Activated B cell treated with CpG ODN at 0.5 μM for 24 hours (primary cell): ENCODE measurements at regions of chr15 and their contacts with region 1.

Region 1: DNA sequence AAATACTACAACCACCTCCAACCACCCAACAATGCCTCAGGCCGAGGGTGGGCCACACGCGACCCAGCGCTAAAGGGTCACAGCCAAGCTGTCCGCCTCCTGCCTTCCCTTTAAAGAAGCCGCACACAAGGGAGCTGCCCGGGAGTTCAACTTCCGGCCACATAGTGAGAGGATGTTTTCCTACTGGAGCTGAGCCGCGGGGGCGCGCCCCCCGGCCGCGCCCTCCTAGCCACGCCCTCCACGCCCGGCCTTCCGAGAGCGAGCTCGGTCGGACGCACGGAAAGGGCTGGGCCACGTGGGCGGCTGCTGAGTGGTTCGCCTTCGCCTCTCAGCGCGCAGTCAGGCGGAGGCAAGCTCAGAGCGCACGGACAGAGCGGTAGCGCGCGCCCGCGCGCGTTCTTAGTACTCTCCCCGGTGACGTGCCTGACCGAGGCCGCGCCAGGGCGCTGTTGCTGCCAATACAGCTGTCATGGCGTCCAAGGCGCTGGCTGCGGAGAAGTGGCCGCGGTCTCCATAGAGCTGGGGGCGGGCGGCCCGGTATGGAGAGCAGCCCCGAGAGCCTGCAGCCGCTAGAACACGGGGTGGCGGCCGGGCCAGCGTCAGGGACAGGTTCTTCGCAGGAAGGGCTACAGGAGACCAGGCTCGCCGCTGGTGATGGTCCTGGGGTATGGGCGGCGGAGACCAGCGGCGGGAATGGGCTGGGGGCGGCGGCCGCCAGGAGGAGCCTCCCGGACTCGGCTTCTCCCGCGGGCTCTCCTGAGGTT is at the start of gene MINDY2:
- DNase-seq: peak; percentile 89
- ATAC-seq: peak; percentile 94
- H3K4me3 Mint-ChIP-seq: peak within 1 kb of the TSS; percentile 93
- H3K27ac Mint-ChIP-seq: peak within 1 kb of the TSS; percentile 96
- H3K4me1 Mint-ChIP-seq: peaks cover 6% of the 10 kb centered on the region
- H3K27me3 Mint-ChIP-seq: no peaks in the 10 kb centered on the region
- CTCF ChIP-seq: no peak
- total RNA-seq, gene MINDY2: 5.8 and 6.2 TPM in 2 replicates

Region 2: GRCh38 chr15:58677426-58677825 is 93.6 kb before region 1 on chr15:
- CTCF ChIA-PET with region 1: interaction called, 3 read pairs
- POLR2A ChIA-PET with region 1: no interaction called
- intact Hi-C with region 1: loop called (anchors 1 kb)
- DNase-seq: no peak
- ATAC-seq: no peak
- H3K4me3 Mint-ChIP-seq: no peak overlapping the region
- H3K27ac Mint-ChIP-seq: no peak overlapping the region
- H3K4me1 Mint-ChIP-seq: no peaks in the 10 kb centered on the region
- H3K27me3 Mint-ChIP-seq: no peaks in the 10 kb centered on the region
- CTCF ChIP-seq: no peak

Region 3: DNA sequence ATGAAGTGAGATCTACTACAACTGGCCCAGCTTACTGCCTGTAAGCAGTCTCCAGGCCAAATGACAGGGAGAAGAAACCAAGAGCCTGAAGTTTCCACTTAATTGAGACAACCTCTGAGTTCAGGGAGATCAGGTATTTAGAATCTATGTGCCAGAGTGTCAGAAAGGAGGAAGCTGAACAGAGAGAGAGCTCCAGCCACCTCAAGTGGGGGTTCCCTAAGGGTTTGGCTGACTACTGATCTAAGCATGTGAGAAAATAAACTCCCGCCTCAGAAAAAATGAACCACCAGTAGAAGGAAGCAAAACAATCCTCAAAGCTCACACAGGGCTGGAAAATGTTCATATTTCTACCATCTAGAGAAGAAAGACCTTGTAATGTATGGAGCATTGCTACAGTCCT is 46.6 kb before region 1 on chr15:
- CTCF ChIA-PET with region 1: interaction called, 3 read pairs
- POLR2A ChIA-PET with region 1: interaction called, 19 read pairs
- intact Hi-C with region 1: loop called (anchors 2 kb)
- DNase-seq: no peak
- ATAC-seq: peak; percentile 92
- H3K4me3 Mint-ChIP-seq: peak overlapping the region; percentile 19
- H3K27ac Mint-ChIP-seq: peak overlapping the region; percentile 74
- H3K4me1 Mint-ChIP-seq: peaks cover 64% of the 10 kb centered on the region
- H3K27me3 Mint-ChIP-seq: no peaks in the 10 kb centered on the region
- CTCF ChIP-seq: no peak

Region 4: GRCh38 chr15:58758138-58758537 is 12.9 kb before region 1 on chr15:
- CTCF ChIA-PET with region 1: interaction called, 11 read pairs
- POLR2A ChIA-PET with region 1: interaction called, 4 read pairs
- intact Hi-C with region 1: no loop called
- DNase-seq: no peak
- ATAC-seq: no peak
- H3K4me3 Mint-ChIP-seq: no peak overlapping the region
- H3K27ac Mint-ChIP-seq: no peak overlapping the region
- H3K4me1 Mint-ChIP-seq: no peaks in the 10 kb centered on the region
- H3K27me3 Mint-ChIP-seq: peaks cover 4% of the 10 kb centered on the region
- CTCF ChIP-seq: no peak

Region 5: GRCh38 chr15:59087731-59088130 is 316.7 kb after region 1 on chr15:
- CTCF ChIA-PET with region 1: no interaction called
- POLR2A ChIA-PET with region 1: no interaction called
- intact Hi-C with region 1: no loop called
- DNase-seq: no peak
- ATAC-seq: no peak
- H3K4me3 Mint-ChIP-seq: no peak overlapping the region
- H3K27ac Mint-ChIP-seq: no peak overlapping the region
- H3K4me1 Mint-ChIP-seq: no peaks in the 10 kb centered on the region
- H3K27me3 Mint-ChIP-seq: no peaks in the 10 kb centered on the region
- CTCF ChIP-seq: no peak

Region 6: GRCh38 chr15:59124261-59124660 is 353.2 kb after region 1 on chr15:
- CTCF ChIA-PET with region 1: no interaction called
- POLR2A ChIA-PET with region 1: interaction called, 12 read pairs
- intact Hi-C with region 1: no loop called
- DNase-seq: no peak
- ATAC-seq: no peak
- H3K4me3 Mint-ChIP-seq: no peak overlapping the region
- H3K27ac Mint-ChIP-seq: no peak overlapping the region
- H3K4me1 Mint-ChIP-seq: peaks cover 22% of the 10 kb centered on the region
- H3K27me3 Mint-ChIP-seq: no peaks in the 10 kb centered on the region
- CTCF ChIP-seq: no peak